Natural killer cell (primary cell): ENCODE measurements at regions of chr13 and their contacts with region 1.

Region 1: GRCh38 chr13:89066868-89067466 is 1395.8 kb downstream of the SLITRK5 start:
- DNase-seq: peak in 1 of 2 donors; percentile 44
- ATAC-seq: peak; percentile 77 to 96 (median 89)
- H3K4me3 ChIP-seq: no peak overlapping the region
- H3K4me3 Mint-ChIP-seq: no peak overlapping the region
- H3K27ac ChIP-seq: no peak overlapping the region
- H3K27ac Mint-ChIP-seq: no peak overlapping the region
- H3K4me1 ChIP-seq: no peaks in the 10 kb centered on the region
- H3K4me1 Mint-ChIP-seq: peaks cover 5% of the 10 kb centered on the region in 2 donors
- H3K27me3 ChIP-seq: no peaks in the 10 kb centered on the region
- H3K27me3 Mint-ChIP-seq: no peaks in the 10 kb centered on the region
- CTCF ChIP-seq: peak; percentile 95

Region 2: GRCh38 chr13:87671031-87671752 is 1395.8 kb before region 1 on chr13 and contains the start of gene SLITRK5:
- intact Hi-C with region 1: loop called (anchors 10 kb)
- DNase-seq: peak; percentile 45 to 64
- ATAC-seq: peak; percentile 91 to 93 (median 92)
- H3K4me3 ChIP-seq: peak within 1 kb of the TSS; percentile 61
- H3K4me3 Mint-ChIP-seq: peak within 1 kb of the TSS; percentile 92
- H3K27ac ChIP-seq: no peak within 1 kb of the TSS
- H3K27ac Mint-ChIP-seq: peak within 1 kb of the TSS in 1 of 2 donors; percentile 69
- H3K4me1 ChIP-seq: peaks cover 35% of the 10 kb centered on the region
- H3K4me1 Mint-ChIP-seq: peaks cover 30 to 33% of the 10 kb centered on the region in 2 donors
- H3K27me3 ChIP-seq: peaks cover 55% of the 10 kb centered on the region
- H3K27me3 Mint-ChIP-seq: peaks cover 32 to 38% of the 10 kb centered on the region in 2 donors
- CTCF ChIP-seq: peak; percentile 81
- total RNA-seq, gene SLITRK5: 0.02 to 0.10 (median 0.07) TPM

Region 3: DNA sequence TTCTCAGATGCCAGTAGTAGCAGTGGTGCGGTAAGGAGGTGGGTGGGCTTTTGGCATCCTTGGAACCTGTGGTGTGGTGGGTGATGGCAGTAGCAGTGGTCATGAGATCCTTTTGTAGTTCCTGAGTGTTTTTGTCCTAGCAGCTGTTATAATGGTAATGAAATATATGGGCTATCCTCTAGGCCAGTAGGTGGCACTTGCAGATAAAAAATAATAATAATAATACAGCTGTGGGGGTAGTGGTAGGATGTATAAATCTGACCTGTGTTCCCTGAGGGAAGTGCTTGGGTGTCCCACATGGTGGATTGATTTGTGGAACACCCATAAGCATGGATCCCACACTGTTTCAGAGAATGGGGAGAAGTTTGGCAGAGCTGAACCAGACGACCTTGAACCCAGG is 1061.8 kb before region 1 on chr13:
- intact Hi-C with region 1: loop called (anchors 2 kb)
- DNase-seq: no peak
- ATAC-seq: no peak
- H3K4me3 ChIP-seq: no peak overlapping the region
- H3K4me3 Mint-ChIP-seq: no peak overlapping the region
- H3K27ac ChIP-seq: no peak overlapping the region
- H3K27ac Mint-ChIP-seq: peak overlapping the region in 1 of 2 donors; percentile 56
- H3K4me1 ChIP-seq: no peaks in the 10 kb centered on the region
- H3K4me1 Mint-ChIP-seq: peaks cover 7 to 13% of the 10 kb centered on the region in 2 donors
- H3K27me3 ChIP-seq: no peaks in the 10 kb centered on the region
- H3K27me3 Mint-ChIP-seq: no peaks in the 10 kb centered on the region
- CTCF ChIP-seq: no peak

Region 4: DNA sequence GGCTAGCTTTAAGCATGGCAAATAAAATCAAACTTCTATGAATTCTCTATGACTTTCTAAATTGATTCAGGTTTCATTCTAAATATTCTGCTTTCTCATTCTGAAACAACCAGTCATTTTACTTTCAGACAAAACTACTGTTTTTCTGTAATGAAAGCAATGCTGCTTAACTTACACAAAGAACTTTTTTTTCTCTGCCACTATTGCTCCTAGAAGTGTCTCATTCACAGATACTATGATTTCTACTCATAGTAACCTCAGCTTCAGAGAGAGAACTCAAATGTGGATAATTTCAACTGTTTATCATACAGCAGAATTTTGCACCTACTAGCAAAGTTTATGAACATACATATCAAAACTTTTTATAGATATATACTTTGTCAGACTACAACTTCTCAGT is 671.2 kb before region 1 on chr13:
- intact Hi-C with region 1: no loop called
- DNase-seq: no peak
- ATAC-seq: no peak
- H3K4me3 ChIP-seq: no peak overlapping the region
- H3K4me3 Mint-ChIP-seq: no peak overlapping the region
- H3K27ac ChIP-seq: no peak overlapping the region
- H3K27ac Mint-ChIP-seq: no peak overlapping the region
- H3K4me1 ChIP-seq: no peaks in the 10 kb centered on the region
- H3K4me1 Mint-ChIP-seq: peaks cover 0 to 5% of the 10 kb centered on the region in 2 donors
- H3K27me3 ChIP-seq: no peaks in the 10 kb centered on the region
- H3K27me3 Mint-ChIP-seq: no peaks in the 10 kb centered on the region
- CTCF ChIP-seq: no peak

Region 5: GRCh38 chr13:89034015-89034414 is 33.0 kb before region 1 on chr13:
- intact Hi-C with region 1: no loop called
- DNase-seq: no peak
- ATAC-seq: no peak
- H3K4me3 ChIP-seq: no peak overlapping the region
- H3K4me3 Mint-ChIP-seq: no peak overlapping the region
- H3K27ac ChIP-seq: no peak overlapping the region
- H3K27ac Mint-ChIP-seq: no peak overlapping the region
- H3K4me1 ChIP-seq: no peaks in the 10 kb centered on the region
- H3K4me1 Mint-ChIP-seq: peaks cover 0 to 15% of the 10 kb centered on the region in 2 donors
- H3K27me3 ChIP-seq: no peaks in the 10 kb centered on the region
- H3K27me3 Mint-ChIP-seq: no peaks in the 10 kb centered on the region
- CTCF ChIP-seq: no peak